BJ (cell line): ENCODE measurements at regions of chr5 and their contacts with region 1.

Region 1: DNA sequence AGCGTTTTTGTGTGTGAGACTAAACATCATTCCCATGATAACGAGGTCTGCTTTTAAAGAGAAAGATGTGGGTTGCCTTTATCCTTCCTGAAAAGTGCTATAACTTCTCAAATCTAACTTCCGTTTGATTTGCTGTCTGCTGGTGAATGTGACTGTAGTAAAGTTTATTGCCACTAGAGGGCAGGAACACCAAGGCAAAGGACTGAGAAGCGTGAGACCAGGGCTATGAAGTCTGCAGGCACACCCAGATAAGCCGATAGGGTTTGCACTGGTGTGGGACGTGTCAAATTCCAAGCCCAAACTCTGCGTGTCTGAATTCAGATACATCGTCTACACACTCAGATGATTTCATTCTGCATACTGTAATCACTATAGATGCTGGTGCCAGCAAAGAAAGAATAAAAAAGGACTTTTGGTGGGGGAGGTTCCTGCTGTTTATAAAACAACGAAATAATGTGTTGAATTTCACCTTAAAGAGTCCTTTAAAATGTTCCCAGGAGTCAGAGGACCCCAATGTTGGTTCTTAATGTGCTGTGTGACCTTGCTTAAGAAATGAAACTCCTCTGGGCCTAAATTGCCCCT is 87.2 kb downstream of the PTTG1 start:
- DNase-seq: peak; percentile 39
- H3K4me3 ChIP-seq: no peak overlapping the region
- H3K27me3 ChIP-seq: peaks cover 2% of the 10 kb centered on the region; the same call in 1 of the 2 replicates
- CTCF ChIP-seq: peak; percentile 83

Region 2: GRCh38 chr5:160497878-160498277 is 11.0 kb before region 1 on chr5:
- CTCF ChIA-PET with region 1: interaction called, 14 read pairs
- POLR2A ChIA-PET with region 1: no interaction called
- DNase-seq: no peak
- H3K4me3 ChIP-seq: no peak overlapping the region
- H3K27me3 ChIP-seq: no peaks in the 10 kb centered on the region
- CTCF ChIP-seq: no peak

Region 3: GRCh38 chr5:160573318-160573717 is 64.4 kb after region 1 on chr5:
- CTCF ChIA-PET with region 1: no interaction called
- POLR2A ChIA-PET with region 1: no interaction called
- DNase-seq: no peak
- H3K4me3 ChIP-seq: no peak overlapping the region
- H3K27me3 ChIP-seq: no peaks in the 10 kb centered on the region
- CTCF ChIP-seq: no peak